Activated CD8-positive, alpha-beta T cell treated with anti-CD3 and anti-CD28 coated beads for 36 hours (primary cell): ENCODE measurements at regions of chr5 and their contacts with region 1.

Region 1: GRCh38 chr5:123423278-123424149 is at the start of gene CEP120:
- DNase-seq: peak; percentile 99
- ATAC-seq: peak; percentile 96
- H3K4me3 Mint-ChIP-seq: no peak within 1 kb of the TSS
- H3K27ac Mint-ChIP-seq: no peak within 1 kb of the TSS
- H3K4me1 Mint-ChIP-seq: peaks cover 15% of the 10 kb centered on the region
- H3K27me3 Mint-ChIP-seq: no peaks in the 10 kb centered on the region
- CTCF ChIP-seq: peak; percentile 67
- total RNA-seq, gene CEP120: 22.6 to 28.3 TPM

Region 2: DNA sequence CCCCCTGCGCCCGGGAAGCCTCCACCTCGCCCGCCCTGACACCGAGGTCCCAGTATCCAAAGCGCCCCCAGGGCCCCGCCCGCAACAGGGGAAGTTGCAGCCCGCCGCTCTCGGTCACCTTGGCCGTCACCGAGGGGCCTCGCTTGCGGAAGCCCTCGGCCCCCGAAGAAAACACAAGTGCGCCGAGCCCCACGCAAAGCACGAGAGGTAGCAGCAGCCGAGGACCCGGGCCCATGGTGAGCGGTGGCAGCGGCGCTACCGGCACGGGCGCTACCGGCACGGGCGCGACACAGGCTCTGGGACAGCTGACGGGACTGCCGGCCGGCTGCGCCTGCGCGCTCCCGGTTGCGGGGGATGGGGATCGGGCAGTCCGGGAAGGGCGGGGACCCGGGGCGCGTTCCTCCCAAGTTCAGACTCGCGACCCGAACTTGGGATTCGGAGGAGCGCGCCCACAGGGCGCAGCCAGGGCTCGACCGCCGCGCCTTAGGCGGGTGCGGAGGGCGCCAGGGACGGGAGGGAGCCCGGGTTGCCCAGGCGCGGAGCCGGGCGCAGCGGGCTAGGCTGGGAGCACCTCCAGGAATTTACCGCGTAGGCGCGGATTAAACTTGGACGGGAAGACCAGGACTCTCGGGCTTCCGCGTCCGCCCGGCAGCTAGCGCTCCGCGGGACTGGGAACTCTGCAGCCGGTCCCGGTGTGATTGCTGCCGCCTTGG is 387.0 kb before region 1 on chr5 and contains the start of gene PPIC:
- CTCF ChIA-PET with region 1: no interaction called
- POLR2A ChIA-PET with region 1: no interaction called
- intact Hi-C with region 1: no loop called
- DNase-seq: peak; percentile 11
- ATAC-seq: peak; percentile 49
- H3K4me3 Mint-ChIP-seq: peak within 1 kb of the TSS; percentile 53
- H3K27ac Mint-ChIP-seq: no peak within 1 kb of the TSS
- H3K4me1 Mint-ChIP-seq: peaks cover 9% of the 10 kb centered on the region
- H3K27me3 Mint-ChIP-seq: peaks cover 47% of the 10 kb centered on the region
- CTCF ChIP-seq: no peak
- total RNA-seq, gene PPIC: not detected

Region 3: GRCh38 chr5:123294544-123294943 is 129.0 kb before region 1 on chr5:
- CTCF ChIA-PET with region 1: no interaction called
- POLR2A ChIA-PET with region 1: no interaction called
- intact Hi-C with region 1: no loop called
- DNase-seq: no peak
- ATAC-seq: no peak
- H3K4me3 Mint-ChIP-seq: no peak overlapping the region
- H3K27ac Mint-ChIP-seq: no peak overlapping the region
- H3K4me1 Mint-ChIP-seq: no peaks in the 10 kb centered on the region
- H3K27me3 Mint-ChIP-seq: peaks cover 13% of the 10 kb centered on the region
- CTCF ChIP-seq: no peak

Region 4: DNA sequence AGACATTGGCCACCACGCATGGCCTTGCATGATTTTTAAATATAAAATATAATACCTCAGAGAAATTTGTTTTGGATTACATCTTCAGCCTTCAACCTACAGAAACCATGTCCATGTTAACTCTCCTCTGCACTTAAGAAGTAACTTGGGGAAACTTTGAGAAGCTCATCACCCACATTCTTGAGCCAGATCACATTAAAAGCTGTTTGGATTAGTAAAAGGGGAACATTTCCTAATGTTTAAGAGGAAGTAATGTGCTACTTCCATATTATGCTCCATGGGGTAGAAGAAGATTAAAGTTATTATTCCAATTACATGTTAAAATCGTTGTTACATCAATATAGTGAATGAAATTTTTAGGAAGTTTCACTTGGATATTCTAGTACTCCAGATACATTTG is 10.1 kb after region 1 on chr5:
- CTCF ChIA-PET with region 1: interaction called, 19 read pairs
- POLR2A ChIA-PET with region 1: interaction called, 14 read pairs
- intact Hi-C with region 1: no loop called
- DNase-seq: no peak
- ATAC-seq: no peak
- H3K4me3 Mint-ChIP-seq: no peak overlapping the region
- H3K27ac Mint-ChIP-seq: no peak overlapping the region
- H3K4me1 Mint-ChIP-seq: peaks cover 16% of the 10 kb centered on the region
- H3K27me3 Mint-ChIP-seq: peaks cover 2% of the 10 kb centered on the region
- CTCF ChIP-seq: no peak

Region 5: GRCh38 chr5:123448017-123448617 is 24.6 kb after region 1 on chr5:
- CTCF ChIA-PET with region 1: interaction called, 21 read pairs
- POLR2A ChIA-PET with region 1: interaction called, 12 read pairs
- intact Hi-C with region 1: no loop called
- DNase-seq: peak; percentile 33
- ATAC-seq: peak; percentile 86
- H3K4me3 Mint-ChIP-seq: no peak overlapping the region
- H3K27ac Mint-ChIP-seq: peak overlapping the region; percentile 6
- H3K4me1 Mint-ChIP-seq: peaks cover 28% of the 10 kb centered on the region
- H3K27me3 Mint-ChIP-seq: peaks cover 8% of the 10 kb centered on the region
- CTCF ChIP-seq: no peak

Region 6: DNA sequence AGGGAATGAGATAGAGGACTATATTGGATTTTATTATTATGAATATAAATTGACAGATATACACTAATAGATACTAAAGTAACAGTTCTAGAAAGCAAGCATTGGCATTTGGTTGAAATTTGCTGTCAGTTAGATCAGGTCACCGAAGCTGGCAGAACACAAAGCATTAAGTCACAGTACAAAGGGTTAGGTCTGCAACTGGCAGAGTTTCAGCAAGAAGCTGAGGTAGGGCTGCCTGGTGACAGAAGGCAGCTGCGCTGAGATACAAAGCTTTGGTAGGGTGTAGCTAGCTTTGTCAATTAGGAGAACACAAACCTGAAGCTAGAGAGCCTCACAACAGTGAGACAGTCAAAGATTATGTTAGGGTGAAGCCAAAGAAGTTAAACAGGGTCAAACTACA is 82.1 kb after region 1 on chr5:
- CTCF ChIA-PET with region 1: interaction called, 14 read pairs
- POLR2A ChIA-PET with region 1: interaction called, 64 read pairs
- intact Hi-C with region 1: loop called (anchors 5 kb)
- DNase-seq: no peak
- ATAC-seq: no peak
- H3K4me3 Mint-ChIP-seq: no peak overlapping the region
- H3K27ac Mint-ChIP-seq: no peak overlapping the region
- H3K4me1 Mint-ChIP-seq: peaks cover 7% of the 10 kb centered on the region
- H3K27me3 Mint-ChIP-seq: peaks cover 11% of the 10 kb centered on the region
- CTCF ChIP-seq: no peak

Region 7: GRCh38 chr5:123518111-123518510 is 94.6 kb after region 1 on chr5:
- CTCF ChIA-PET with region 1: interaction called, 11 read pairs
- POLR2A ChIA-PET with region 1: interaction called, 64 read pairs
- intact Hi-C with region 1: loop called (anchors 5 kb)
- DNase-seq: peak; percentile 11
- ATAC-seq: no peak
- H3K4me3 Mint-ChIP-seq: no peak overlapping the region
- H3K27ac Mint-ChIP-seq: no peak overlapping the region
- H3K4me1 Mint-ChIP-seq: peaks cover 72% of the 10 kb centered on the region
- H3K27me3 Mint-ChIP-seq: no peaks in the 10 kb centered on the region
- CTCF ChIP-seq: no peak

Region 8: GRCh38 chr5:123610665-123611405 is 187.3 kb after region 1 on chr5:
- CTCF ChIA-PET with region 1: interaction called, 27 read pairs
- POLR2A ChIA-PET with region 1: interaction called, 3 read pairs
- intact Hi-C with region 1: loop called (anchors 5 kb)
- DNase-seq: peak; percentile 28
- ATAC-seq: peak; percentile 65
- H3K4me3 Mint-ChIP-seq: no peak overlapping the region
- H3K27ac Mint-ChIP-seq: peak overlapping the region; percentile 8
- H3K4me1 Mint-ChIP-seq: peaks cover 8% of the 10 kb centered on the region
- H3K27me3 Mint-ChIP-seq: no peaks in the 10 kb centered on the region
- CTCF ChIP-seq: peak; percentile 88